ENCODE measurements at regions of chr2 and their contacts with region 1.

Region 1: GRCh38 chr2:109486711-109487535 is 126.8 kb downstream of the SEPTIN10 start:
- DNase-seq: peak; percentile 50

Region 2: DNA sequence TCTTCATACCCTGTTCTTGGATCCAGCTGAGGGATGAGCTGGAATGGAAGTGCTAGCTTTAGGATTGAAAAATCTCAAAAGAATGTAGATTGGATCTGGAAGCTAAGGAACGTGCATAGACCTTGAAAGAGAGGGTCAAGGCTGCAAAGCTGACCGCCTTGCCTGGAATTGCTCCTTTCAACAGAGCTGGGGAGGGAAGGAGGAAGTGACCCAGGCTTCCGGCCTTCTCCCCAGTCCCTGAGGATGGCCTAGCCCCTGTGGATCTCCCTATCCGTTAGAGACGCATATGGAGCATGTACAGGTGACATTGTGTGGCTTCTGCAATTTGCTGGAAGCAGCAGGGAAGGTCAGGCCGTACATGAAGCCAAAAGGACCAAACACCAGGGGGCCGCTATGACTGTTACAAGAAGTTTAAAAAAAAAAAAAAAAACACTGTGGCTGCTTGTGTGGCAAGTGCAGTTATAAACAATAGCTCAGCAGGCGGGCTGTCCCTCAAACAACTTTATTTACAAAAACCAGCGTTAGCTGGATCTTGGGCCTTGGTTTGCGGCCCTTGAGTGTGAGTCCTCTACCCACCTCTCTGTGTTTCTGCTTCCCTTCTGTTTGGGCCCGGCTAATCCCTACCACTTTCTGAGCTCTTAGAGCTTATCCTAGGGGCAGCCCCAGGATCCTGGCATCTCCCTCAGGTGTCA is 100.8 kb before region 1 on chr2:
- intact Hi-C with region 1: no loop called
- DNase-seq: peak; percentile 57

Region 3: GRCh38 chr2:109446278-109447131 is 40.4 kb before region 1 on chr2:
- intact Hi-C with region 1: loop called in 1 of 2 experiments (anchors 1 kb)
- DNase-seq: peak; percentile 68

Region 4: GRCh38 chr2:109510136-109511028 is 23.5 kb after region 1 on chr2:
- intact Hi-C with region 1: loop called in 1 of 2 experiments (anchors 1 kb)
- DNase-seq: peak; percentile 93